OCI-LY7 (cell line): ENCODE measurements at regions of chr7 and their contacts with region 1.

Region 1: DNA sequence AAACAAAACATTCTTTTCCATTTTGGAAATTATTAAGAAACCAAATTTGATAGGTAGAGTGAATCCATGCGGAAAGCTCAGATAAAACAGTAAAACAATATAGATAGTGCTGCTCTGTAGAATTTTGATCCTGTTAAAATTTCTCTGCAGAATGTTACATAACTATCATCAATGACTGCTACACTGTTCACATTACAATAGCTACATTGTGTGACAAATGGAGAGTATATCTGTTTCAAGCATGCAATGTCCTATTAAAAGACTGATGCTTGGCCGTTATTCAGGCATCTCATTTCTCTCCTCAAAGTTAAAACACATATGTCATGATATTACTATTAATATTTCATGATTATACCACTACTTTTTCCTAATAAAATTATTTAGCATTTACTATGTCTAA is 14.7 kb upstream of the TMEM106B start:
- DNase-seq: no peak
- H3K4me3 ChIP-seq: no peak overlapping the region
- H3K27ac ChIP-seq: no peak overlapping the region
- H3K4me1 ChIP-seq: no peaks in the 10 kb centered on the region
- CTCF ChIP-seq: no peak

Region 2: GRCh38 chr7:12256090-12256489 is 59.7 kb after region 1 on chr7:
- CTCF ChIA-PET with region 1: no interaction called
- POLR2A ChIA-PET with region 1: interaction called, 10 read pairs
- intact Hi-C with region 1: no loop called
- DNase-seq: no peak
- H3K4me3 ChIP-seq: no peak overlapping the region
- H3K27ac ChIP-seq: no peak overlapping the region
- H3K4me1 ChIP-seq: no peaks in the 10 kb centered on the region
- CTCF ChIP-seq: no peak